ENCODE measurements at regions of chr12 and their contacts with region 1.

Region 1: DNA sequence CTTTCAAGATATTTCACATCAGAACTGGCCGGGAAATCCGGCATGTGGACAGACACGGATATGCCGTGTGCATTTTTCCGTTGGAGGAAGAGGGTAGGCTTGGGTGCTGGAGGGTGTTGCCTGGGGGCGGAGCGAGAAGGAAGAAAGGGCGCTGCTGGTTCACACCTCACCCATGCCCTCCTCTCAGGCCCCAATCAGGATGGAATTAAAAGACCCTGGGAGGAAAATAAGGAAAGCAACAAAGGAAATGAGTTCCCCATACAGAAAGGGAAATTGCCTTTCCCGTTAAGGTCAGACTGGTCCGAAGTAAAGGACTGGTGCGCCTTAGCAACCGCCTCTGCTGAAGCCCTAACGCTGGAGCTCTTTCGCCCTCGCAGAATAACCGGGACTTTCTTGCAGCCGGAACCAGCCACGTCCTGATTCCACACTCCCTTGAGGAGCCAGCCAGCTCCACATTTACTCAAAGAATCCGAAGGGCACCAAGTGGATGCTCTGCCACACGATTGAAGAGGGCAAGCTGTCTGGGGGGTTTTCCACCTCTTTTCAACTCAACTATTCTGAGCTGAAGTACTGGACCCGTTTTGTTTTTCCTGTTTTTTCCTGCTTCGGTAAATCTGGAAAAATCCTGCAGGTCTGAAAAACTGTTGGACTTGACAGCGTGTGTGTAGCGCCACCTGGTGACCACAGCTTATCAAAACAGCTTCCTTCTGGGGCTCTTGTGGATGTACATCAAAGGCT is 37.7 kb upstream of the BCL2L14 start:
- DNase-seq: peak; percentile 82 to 88
- ATAC-seq: peak; percentile 86

Region 2: DNA sequence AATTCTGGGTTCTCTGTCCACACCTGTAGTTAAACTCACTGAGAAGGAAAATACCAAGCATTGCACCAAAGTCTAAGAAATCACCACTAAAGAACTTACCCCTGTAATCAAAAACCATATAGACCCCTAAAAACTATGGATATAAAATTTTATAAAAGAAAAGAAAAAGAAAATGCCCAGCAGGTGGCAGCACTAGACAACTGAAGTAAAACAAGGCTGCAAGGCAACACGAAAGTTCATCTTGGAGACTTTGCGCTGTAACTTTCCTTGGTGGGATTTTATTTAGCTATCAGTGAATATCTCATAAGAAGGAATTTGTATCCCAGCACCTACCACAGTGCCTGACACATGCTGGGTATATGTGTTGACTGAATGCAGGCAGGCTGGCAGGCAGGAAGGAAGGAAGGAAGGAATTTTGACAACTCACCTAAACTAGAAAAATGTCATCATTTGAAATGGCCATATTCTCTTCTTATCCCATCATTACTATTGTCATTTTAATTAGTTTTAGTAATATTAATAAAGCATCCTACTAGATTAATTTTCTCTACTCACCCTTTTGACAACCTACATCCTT is 451.8 kb before region 1 on chr12:
- intact Hi-C with region 1: loop called (anchors 2 to 10 kb)
- DNase-seq: peak; percentile 41 to 85
- ATAC-seq: peak; percentile 39

Measured in left colon (tissue), 2 donors.